Common myeloid progenitor, CD34-positive (primary cell): ENCODE measurements at regions of chr2 and their contacts with region 1.

Region 1: DNA sequence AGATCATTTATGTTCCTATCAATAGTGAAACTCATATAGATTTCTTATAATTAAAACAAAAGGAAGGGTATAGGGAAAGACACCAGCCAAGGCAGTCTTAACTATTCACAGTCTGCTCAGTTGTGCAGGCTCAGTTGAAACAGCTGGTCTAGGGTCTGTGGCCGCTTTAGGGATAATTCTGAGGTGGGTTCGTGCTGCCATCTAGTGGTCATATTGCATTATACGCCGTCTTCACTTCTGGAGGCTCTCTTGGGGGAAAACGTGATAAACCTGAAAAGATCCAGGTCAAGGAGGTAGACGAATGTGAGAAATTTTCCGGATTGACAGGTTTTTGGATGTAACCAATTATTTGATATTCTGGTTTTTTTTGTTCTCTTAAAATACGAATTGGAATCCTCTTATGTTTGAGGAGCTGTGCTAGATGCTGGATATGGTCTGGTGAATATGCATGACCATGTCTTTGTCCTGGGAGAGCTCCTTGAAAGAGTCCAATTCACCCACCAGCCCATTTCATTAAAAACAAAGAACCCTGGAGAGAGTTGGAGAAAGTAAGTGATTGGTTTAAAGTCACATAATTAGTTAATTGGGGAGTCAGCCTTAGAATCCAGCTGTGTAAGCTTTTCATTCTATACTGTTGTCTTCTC is 492.4 kb downstream of the PLCL1 start:
- DNase-seq: peak; percentile 68 to 85 (median 79)
- H3K4me3 ChIP-seq: no peak overlapping the region
- H3K27ac ChIP-seq: no peak overlapping the region
- H3K4me1 ChIP-seq: peaks cover 0 to 5% (median 0%) of the 10 kb centered on the region in 4 experiments
- H3K27me3 ChIP-seq: peaks cover 0 to 3% (median 0%) of the 10 kb centered on the region in 5 experiments

Region 2: GRCh38 chr2:197813093-197813787 is 483.5 kb before region 1 on chr2:
- CTCF ChIA-PET with region 1: interaction called, 10 read pairs
- POLR2A ChIA-PET with region 1: no interaction called
- DNase-seq: peak; percentile 18 to 48 (median 35)
- H3K4me3 ChIP-seq: no peak overlapping the region
- H3K27ac ChIP-seq: no peak overlapping the region
- H3K4me1 ChIP-seq: peaks cover 0 to 2% (median 0%) of the 10 kb centered on the region in 4 experiments
- H3K27me3 ChIP-seq: peaks cover 0 to 1% (median 0%) of the 10 kb centered on the region in 5 experiments

Region 3: DNA sequence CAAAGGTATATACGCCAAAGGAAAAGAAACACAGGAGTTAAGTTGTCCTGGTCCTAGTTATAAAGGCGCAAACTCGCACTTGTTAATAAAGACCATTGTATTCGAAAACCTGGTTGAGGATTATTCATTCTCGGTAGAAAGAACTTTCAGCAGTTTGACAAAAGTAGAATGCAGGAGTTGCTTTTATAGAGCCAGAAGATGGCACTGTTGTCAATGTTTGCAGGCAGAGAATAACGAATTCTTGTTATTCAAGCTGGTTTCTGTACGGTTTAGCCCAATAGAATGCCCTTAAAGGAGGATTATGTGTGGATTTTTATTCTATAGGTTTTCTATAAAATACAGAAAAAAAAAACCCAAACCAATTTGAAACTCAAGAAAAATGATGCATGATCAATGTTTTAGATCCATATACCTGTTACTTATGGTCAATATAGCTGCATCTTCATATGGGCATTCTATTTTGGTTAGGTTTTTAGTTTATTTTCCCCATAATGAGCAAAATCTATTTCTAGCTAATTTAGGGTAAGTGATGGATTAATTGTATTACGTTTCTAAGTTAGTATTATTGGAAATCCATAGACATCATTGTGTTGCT is 17.9 kb after region 1 on chr2:
- CTCF ChIA-PET with region 1: interaction called, 21 read pairs
- POLR2A ChIA-PET with region 1: no interaction called
- DNase-seq: peak; percentile 68 to 85 (median 79)
- H3K4me3 ChIP-seq: no peak overlapping the region
- H3K27ac ChIP-seq: no peak overlapping the region
- H3K4me1 ChIP-seq: no peaks in the 10 kb centered on the region
- H3K27me3 ChIP-seq: peaks cover 9 to 82% (median 30%) of the 10 kb centered on the region in 5 experiments